B cell (primary cell): ENCODE measurements at regions of chr11 and their contacts with region 1.

Region 1: DNA sequence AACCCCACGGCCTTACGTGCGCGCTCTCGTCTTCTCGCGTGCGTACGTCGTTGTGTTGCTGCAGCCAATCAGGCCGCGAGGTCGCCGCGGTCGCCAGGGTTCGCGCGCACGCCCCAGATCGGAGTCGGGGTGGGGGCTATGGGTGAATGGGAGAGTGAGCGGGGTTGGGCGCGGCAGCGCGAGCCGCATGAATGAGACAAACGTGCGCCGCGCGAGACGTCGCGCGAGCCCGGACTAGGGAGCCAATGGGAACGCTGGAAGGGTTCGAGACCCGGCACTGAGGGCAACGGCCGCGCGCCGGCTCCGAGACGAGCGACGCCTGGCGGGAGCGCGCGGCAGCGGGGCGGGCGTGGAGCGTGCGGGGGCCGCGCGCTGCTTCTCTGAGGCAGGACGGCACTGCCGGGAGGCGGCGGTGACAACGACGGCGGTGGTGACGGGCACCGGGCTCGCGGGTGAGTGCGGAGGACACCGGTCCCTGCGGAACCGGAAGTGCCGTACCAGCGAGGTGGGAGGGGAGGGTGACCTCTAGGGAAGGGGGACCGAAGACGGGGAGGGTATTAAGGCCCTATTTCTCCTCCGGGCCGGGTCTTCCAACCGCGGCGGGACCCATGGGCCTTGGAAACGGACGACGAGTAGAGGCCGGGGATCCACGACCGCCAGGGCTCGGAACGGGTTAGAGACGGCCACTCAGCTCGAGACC is at the start of gene ZDHHC5:
- DNase-seq: peak; percentile 100
- ATAC-seq: peak; percentile 78
- H3K4me3 ChIP-seq: peak within 1 kb of the TSS; percentile 72 to 96 (median 83)
- H3K4me3 Mint-ChIP-seq: peak within 1 kb of the TSS; percentile 95
- H3K27ac ChIP-seq: peak within 1 kb of the TSS; percentile 98 to 99
- H3K27ac Mint-ChIP-seq: peak within 1 kb of the TSS; percentile 100
- H3K4me1 ChIP-seq: peaks cover 25% of the 10 kb centered on the region in 2 donors
- H3K4me1 Mint-ChIP-seq: peaks cover 50% of the 10 kb centered on the region
- H3K27me3 ChIP-seq: no peaks in the 10 kb centered on the region
- H3K27me3 Mint-ChIP-seq: no peaks in the 10 kb centered on the region
- CTCF ChIP-seq: peak; percentile 55
- total RNA-seq, gene ZDHHC5: 53.8 and 56.2 TPM in 2 replicates

Region 2: GRCh38 chr11:57335343-57336110 is 332.4 kb before region 1 on chr11 and contains the start of gene SSRP1:
- CTCF ChIA-PET with region 1: no interaction called
- POLR2A ChIA-PET with region 1: interaction called, 5 read pairs
- intact Hi-C with region 1: loop called (anchors 5 kb)
- DNase-seq: peak; percentile 91
- ATAC-seq: peak; percentile 96
- H3K4me3 ChIP-seq: peak within 1 kb of the TSS; percentile 61 to 87 (median 83)
- H3K4me3 Mint-ChIP-seq: peak within 1 kb of the TSS; percentile 97
- H3K27ac ChIP-seq: peak within 1 kb of the TSS; percentile 74 to 87
- H3K27ac Mint-ChIP-seq: peak within 1 kb of the TSS; percentile 99
- H3K4me1 ChIP-seq: peaks cover 17 to 23% of the 10 kb centered on the region in 2 donors
- H3K4me1 Mint-ChIP-seq: peaks cover 27% of the 10 kb centered on the region
- H3K27me3 ChIP-seq: no peaks in the 10 kb centered on the region
- H3K27me3 Mint-ChIP-seq: peaks cover 5% of the 10 kb centered on the region
- CTCF ChIP-seq: no peak
- total RNA-seq, gene SSRP1: 63.8 and 66.6 TPM in 2 replicates

Region 3: GRCh38 chr11:57657194-57658022 is 10.5 kb before region 1 on chr11 and contains the start of gene CLP1:
- CTCF ChIA-PET with region 1: interaction called, 6 read pairs
- POLR2A ChIA-PET with region 1: interaction called, 22 read pairs
- intact Hi-C with region 1: loop called (anchors 1 kb)
- DNase-seq: peak; percentile 98
- ATAC-seq: peak; percentile 97
- H3K4me3 ChIP-seq: peak within 1 kb of the TSS; percentile 68 to 95 (median 92)
- H3K4me3 Mint-ChIP-seq: peak within 1 kb of the TSS; percentile 94
- H3K27ac ChIP-seq: peak within 1 kb of the TSS; percentile 77 to 92
- H3K27ac Mint-ChIP-seq: peak within 1 kb of the TSS; percentile 94
- H3K4me1 ChIP-seq: peaks cover 8 to 14% of the 10 kb centered on the region in 2 donors
- H3K4me1 Mint-ChIP-seq: peaks cover 28% of the 10 kb centered on the region
- H3K27me3 ChIP-seq: no peaks in the 10 kb centered on the region
- H3K27me3 Mint-ChIP-seq: no peaks in the 10 kb centered on the region
- CTCF ChIP-seq: no peak
- total RNA-seq, gene CLP1: 15.5 and 15.8 TPM in 2 replicates

Region 4: DNA sequence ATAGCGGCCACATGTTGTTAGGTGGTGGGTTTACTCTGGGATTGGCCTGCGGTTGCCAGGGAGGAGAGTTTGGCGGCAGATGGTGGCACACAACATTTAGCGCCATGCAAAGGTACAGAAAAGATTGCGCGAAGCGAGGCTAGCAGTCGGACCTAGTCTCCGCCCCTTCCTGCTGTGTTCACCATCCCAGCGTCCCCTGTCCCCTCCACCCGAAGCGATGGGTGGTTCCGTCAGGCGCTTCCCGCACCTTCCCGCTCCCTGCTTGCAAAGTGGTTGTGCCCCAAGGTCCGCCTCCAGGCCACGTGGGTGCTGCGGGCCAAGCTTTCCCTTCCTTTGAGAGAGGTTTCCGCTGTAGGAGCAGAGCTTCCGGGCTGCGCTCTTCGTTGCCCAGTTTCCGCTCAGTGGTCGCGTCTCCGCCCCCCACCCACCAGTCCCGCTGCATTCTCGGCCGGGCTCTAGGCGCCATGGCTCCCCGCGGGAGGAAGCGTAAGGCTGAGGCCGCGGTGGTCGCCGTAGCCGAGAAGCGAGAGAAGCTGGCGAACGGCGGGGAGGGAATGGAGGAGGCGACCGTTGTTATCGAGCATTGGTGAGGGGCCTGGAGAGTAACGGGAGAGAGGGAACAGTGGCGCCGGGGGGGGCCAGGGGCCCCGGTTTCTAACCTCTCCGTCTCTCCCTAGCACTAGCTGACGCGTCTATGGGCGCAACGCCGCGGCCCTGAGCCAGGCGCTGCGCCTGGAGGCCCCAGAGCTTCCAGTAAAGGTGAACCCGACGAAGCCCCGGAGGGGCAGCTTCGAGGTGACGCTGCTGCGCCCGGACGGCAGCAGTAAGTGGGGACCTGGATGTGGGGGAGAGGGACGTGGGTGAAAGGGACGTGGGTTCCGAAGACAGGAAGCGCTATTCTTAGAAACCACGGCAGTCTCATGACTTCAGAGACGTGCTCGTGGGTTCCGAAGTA is 73.5 kb after region 1 on chr11 and contains the start of gene SELENOH:
- CTCF ChIA-PET with region 1: no interaction called
- POLR2A ChIA-PET with region 1: interaction called, 6 read pairs
- intact Hi-C with region 1: loop called (anchors 1 kb)
- DNase-seq: peak; percentile 93
- ATAC-seq: peak; percentile 83
- H3K4me3 ChIP-seq: peak within 1 kb of the TSS; percentile 83 to 97 (median 94)
- H3K4me3 Mint-ChIP-seq: peak within 1 kb of the TSS; percentile 99
- H3K27ac ChIP-seq: peak within 1 kb of the TSS; percentile 90 to 97
- H3K27ac Mint-ChIP-seq: peak within 1 kb of the TSS; percentile 99
- H3K4me1 ChIP-seq: peaks cover 11 to 32% of the 10 kb centered on the region in 2 donors
- H3K4me1 Mint-ChIP-seq: peaks cover 38% of the 10 kb centered on the region
- H3K27me3 ChIP-seq: no peaks in the 10 kb centered on the region
- H3K27me3 Mint-ChIP-seq: no peaks in the 10 kb centered on the region
- CTCF ChIP-seq: no peak
- total RNA-seq, gene SELENOH: 147 and 153 TPM in 2 replicates

Region 5: GRCh38 chr11:58524232-58525036 is 856.5 kb after region 1 on chr11:
- CTCF ChIA-PET with region 1: no interaction called
- POLR2A ChIA-PET with region 1: no interaction called
- intact Hi-C with region 1: loop called (anchors 1 kb)
- DNase-seq: peak; percentile 79
- ATAC-seq: peak; percentile 31
- H3K4me3 ChIP-seq: peak overlapping the region; percentile 22 to 70 (median 45)
- H3K4me3 Mint-ChIP-seq: peak overlapping the region; percentile 84
- H3K27ac ChIP-seq: peak overlapping the region; percentile 81 to 99
- H3K27ac Mint-ChIP-seq: peak overlapping the region; percentile 93
- H3K4me1 ChIP-seq: peaks cover 28 to 32% of the 10 kb centered on the region in 2 donors
- H3K4me1 Mint-ChIP-seq: peaks cover 29% of the 10 kb centered on the region
- H3K27me3 ChIP-seq: no peaks in the 10 kb centered on the region
- H3K27me3 Mint-ChIP-seq: no peaks in the 10 kb centered on the region
- CTCF ChIP-seq: peak; percentile 86

Region 6: GRCh38 chr11:59625703-59626102 is 1957.8 kb after region 1 on chr11:
- CTCF ChIA-PET with region 1: no interaction called
- POLR2A ChIA-PET with region 1: interaction called, 12 read pairs
- intact Hi-C with region 1: no loop called
- DNase-seq: no peak
- ATAC-seq: no peak
- H3K4me3 ChIP-seq: no peak overlapping the region
- H3K4me3 Mint-ChIP-seq: no peak overlapping the region
- H3K27ac ChIP-seq: no peak overlapping the region
- H3K27ac Mint-ChIP-seq: no peak overlapping the region
- H3K4me1 ChIP-seq: no peaks in the 10 kb centered on the region
- H3K4me1 Mint-ChIP-seq: no peaks in the 10 kb centered on the region
- H3K27me3 ChIP-seq: no peaks in the 10 kb centered on the region
- H3K27me3 Mint-ChIP-seq: no peaks in the 10 kb centered on the region
- CTCF ChIP-seq: no peak